Prostate gland (tissue), 2 donors: ENCODE measurements at regions of chr1 and their contacts with region 1.

Region 1: GRCh38 chr1:3283849-3284248 is 170.6 kb upstream of the ARHGEF16 start:
- DNase-seq: peak; percentile 23
- H3K4me3 ChIP-seq: no peak overlapping the region
- H3K27ac ChIP-seq: no peak overlapping the region
- H3K4me1 ChIP-seq: no peaks in the 10 kb centered on the region
- H3K27me3 ChIP-seq: peaks cover 16% of the 10 kb centered on the region
- CTCF ChIP-seq: peak; percentile 45 to 81 (median 64)
- POLR2A ChIP-seq: no peak

Region 2: DNA sequence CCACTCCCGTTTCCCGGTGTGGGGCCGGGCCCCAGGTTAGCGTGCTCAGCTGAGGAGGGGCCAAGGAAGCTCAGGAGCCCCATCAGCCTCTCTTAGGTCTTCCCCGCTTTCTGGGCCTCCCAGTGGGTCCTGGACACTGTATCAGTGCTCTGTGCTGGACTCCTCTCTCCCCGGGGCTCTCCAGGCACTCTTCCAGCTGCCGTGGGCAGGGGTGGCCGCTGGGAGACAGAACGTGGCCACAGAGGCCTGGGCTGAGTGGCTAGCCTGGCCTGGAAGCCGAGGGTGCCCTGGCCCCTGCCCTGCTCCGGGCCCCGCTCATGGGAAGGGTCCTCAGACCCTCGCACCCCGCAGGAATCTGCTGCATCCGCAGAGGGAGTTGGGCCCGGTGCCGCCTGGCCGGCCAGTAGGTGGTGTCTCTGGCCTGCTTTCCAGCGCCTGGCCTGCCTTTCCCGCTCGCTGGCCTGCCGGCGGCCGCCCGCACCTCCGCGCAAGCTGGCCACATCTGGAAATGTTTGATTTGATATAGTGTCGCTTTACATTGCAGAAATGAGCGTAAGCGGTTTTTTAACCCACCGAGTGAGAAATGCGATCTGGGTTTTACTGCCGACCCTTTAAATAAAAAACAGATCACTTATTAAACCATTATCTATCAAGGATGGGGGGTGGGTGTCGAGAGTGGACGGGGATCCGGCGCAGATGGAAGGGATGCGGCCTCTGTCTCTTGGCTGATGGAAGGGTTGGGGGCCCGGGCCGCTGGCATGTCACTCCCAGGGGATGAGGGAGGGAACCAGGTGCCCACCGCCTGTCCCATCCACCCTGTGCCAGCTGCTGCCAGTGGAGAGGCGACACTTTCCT is 407.9 kb before region 1 on chr1:
- intact Hi-C with region 1: loop called (anchors 5 kb)
- DNase-seq: peak; percentile 7
- H3K4me3 ChIP-seq: no peak overlapping the region
- H3K27ac ChIP-seq: no peak overlapping the region
- H3K4me1 ChIP-seq: peaks cover 7% of the 10 kb centered on the region
- H3K27me3 ChIP-seq: no peaks in the 10 kb centered on the region
- CTCF ChIP-seq: peak in 2 of 4 experiments; percentile 18 to 50
- POLR2A ChIP-seq: no peak

Region 3: GRCh38 chr1:3012456-3013291 is 271.2 kb before region 1 on chr1:
- intact Hi-C with region 1: loop called (anchors 5 kb)
- DNase-seq: peak; percentile 33
- H3K4me3 ChIP-seq: no peak overlapping the region
- H3K27ac ChIP-seq: no peak overlapping the region
- H3K4me1 ChIP-seq: no peaks in the 10 kb centered on the region
- H3K27me3 ChIP-seq: peaks cover 26% of the 10 kb centered on the region
- CTCF ChIP-seq: peak; percentile 54 to 93 (median 76)
- POLR2A ChIP-seq: no peak

Region 4: GRCh38 chr1:3069491-3070303 is 214.2 kb before region 1 on chr1:
- intact Hi-C with region 1: loop called (anchors 5 kb)
- DNase-seq: peak; percentile 49
- H3K4me3 ChIP-seq: peak overlapping the region; percentile 61 to 69
- H3K27ac ChIP-seq: peak overlapping the region; percentile 26 to 52
- H3K4me1 ChIP-seq: peaks cover 12% of the 10 kb centered on the region
- H3K27me3 ChIP-seq: peaks cover 51% of the 10 kb centered on the region
- CTCF ChIP-seq: peak in 3 of 4 experiments; percentile 14 to 47 (median 42)
- POLR2A ChIP-seq: no peak

Region 5: GRCh38 chr1:3207217-3207848 is 76.5 kb before region 1 on chr1:
- intact Hi-C with region 1: no loop called
- DNase-seq: no peak
- H3K4me3 ChIP-seq: no peak overlapping the region
- H3K27ac ChIP-seq: no peak overlapping the region
- H3K4me1 ChIP-seq: no peaks in the 10 kb centered on the region
- H3K27me3 ChIP-seq: no peaks in the 10 kb centered on the region
- CTCF ChIP-seq: no peak
- POLR2A ChIP-seq: no peak

Region 6: GRCh38 chr1:3410142-3410925 is 126.5 kb after region 1 on chr1:
- intact Hi-C with region 1: loop called (anchors 10 kb)
- DNase-seq: peak; percentile 62
- H3K4me3 ChIP-seq: no peak overlapping the region
- H3K27ac ChIP-seq: no peak overlapping the region
- H3K4me1 ChIP-seq: no peaks in the 10 kb centered on the region
- H3K27me3 ChIP-seq: peaks cover 31% of the 10 kb centered on the region
- CTCF ChIP-seq: peak; percentile 39 to 83 (median 76)
- POLR2A ChIP-seq: no peak